Aorta (tissue), 5 donors: ENCODE measurements at regions of chr2 and their contacts with region 1.

Region 1: DNA sequence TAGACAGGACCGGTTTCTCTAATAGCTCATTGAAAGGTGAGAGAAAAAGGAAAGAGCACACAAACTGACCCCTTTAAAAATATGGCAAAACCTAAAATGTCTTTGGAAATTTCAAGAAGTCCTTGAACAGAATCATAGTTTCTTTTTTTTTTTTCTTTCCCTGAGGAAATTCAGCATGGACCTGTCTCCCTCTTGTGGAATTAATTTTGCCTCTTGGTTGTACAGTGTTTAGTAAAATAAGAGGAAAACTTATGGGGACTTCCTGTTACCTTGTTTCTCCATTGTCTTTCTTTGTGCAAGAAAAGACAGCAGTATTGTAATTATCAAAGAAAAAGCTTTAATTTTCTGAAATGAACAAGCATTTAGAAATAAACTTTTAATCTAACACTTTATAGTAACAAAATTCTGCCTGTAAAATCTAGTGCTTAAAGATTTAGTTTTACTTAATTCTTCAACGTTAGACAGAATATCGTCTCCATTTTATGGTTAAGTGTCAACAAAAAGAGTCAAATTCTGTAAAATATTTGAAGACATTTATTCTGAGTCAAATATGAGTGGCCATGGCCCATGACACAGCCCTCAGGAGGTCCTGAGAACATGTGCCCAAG is 176.3 kb upstream of the NABP1 start:
- DNase-seq: no peak
- ATAC-seq: peak; percentile 62
- H3K4me3 ChIP-seq: no peak overlapping the region
- H3K27ac ChIP-seq: no peak overlapping the region
- H3K4me1 ChIP-seq: peaks cover 0 to 2% of the 10 kb centered on the region in 2 donors
- H3K27me3 ChIP-seq: no peaks in the 10 kb centered on the region

Region 2: DNA sequence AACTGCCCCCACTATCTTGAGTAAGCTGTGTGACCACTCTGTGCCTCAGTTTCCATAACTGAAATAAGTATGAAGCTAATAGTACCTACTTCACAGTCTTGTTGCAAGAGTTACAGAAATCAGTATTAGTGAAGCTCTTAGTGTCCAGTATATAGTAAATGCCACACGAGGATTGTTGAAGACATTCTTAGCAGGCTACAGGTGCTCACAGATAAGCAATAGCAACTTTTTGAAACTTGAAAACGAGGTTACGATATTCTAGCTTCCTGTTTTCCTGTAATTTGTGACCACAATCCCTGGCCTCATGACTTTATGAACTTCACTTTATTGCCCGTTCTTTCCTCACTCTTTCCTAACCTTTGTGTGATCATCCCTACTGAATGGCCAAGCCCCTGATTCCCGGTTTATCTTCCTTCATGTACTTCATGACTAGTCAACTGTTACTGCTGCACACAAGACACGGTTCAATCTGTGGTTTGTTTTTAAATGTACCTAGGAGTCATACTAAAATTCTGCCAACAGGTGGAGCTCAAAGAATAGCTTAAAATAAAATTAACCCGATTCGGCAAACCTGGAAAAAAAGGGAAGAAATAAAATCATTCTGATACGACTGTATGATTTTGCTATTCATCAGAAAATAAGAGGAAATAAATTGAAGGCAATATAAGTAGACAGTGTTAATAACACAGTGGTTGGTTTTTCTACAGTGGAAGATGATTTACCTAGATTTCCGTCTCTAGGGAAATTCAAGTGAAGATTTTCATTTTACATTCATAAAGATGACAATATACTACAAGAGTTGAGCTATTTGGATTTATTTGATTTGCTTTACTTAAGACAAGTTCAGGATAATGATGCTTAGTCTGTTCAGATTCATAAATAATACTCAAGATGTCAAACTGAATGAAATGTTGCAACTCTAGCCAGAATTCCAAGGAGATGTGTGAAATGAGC is 449.6 kb before region 1 on chr2:
- intact Hi-C with region 1: loop called in 1 of 2 experiments (anchors 10 kb)
- DNase-seq: no peak
- ATAC-seq: no peak
- H3K4me3 ChIP-seq: no peak overlapping the region
- H3K27ac ChIP-seq: no peak overlapping the region
- H3K4me1 ChIP-seq: no peaks in the 10 kb centered on the region
- H3K27me3 ChIP-seq: no peaks in the 10 kb centered on the region

Region 3: DNA sequence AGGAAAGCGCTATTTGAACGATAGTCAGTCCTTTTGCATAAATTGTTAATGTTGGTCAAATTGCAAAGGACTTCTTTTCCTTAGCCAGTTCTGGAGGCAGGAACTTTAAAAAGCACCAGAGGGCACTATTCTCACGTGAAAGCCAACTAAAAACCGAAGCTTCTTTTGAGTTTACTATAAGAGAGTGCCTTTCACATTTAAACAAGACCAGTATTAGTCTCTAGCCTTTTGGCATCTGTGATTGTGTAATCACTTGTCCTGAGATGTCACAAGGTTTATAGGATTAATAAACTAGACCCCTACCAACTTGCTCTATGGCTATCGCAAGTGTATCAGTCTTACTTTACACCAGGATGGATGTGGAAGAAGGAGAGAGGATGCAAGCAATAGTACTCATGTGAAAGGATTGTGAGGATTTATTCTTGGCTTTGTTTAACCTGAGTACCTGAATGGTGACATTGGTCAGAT is 336.5 kb before region 1 on chr2:
- intact Hi-C with region 1: loop called (anchors 2 to 5 kb)
- DNase-seq: no peak
- ATAC-seq: peak; percentile 91
- H3K4me3 ChIP-seq: no peak overlapping the region
- H3K27ac ChIP-seq: no peak overlapping the region
- H3K4me1 ChIP-seq: peaks cover 4 to 11% of the 10 kb centered on the region in 2 donors
- H3K27me3 ChIP-seq: no peaks in the 10 kb centered on the region

Region 4: GRCh38 chr2:191218292-191218898 is 283.3 kb before region 1 on chr2:
- intact Hi-C with region 1: loop called (anchors 5 kb)
- DNase-seq: no peak
- ATAC-seq: no peak
- H3K4me3 ChIP-seq: no peak overlapping the region
- H3K27ac ChIP-seq: no peak overlapping the region
- H3K4me1 ChIP-seq: peaks cover 0 to 2% of the 10 kb centered on the region in 2 donors
- H3K27me3 ChIP-seq: no peaks in the 10 kb centered on the region

Region 5: GRCh38 chr2:191231995-191232394 is 269.7 kb before region 1 on chr2:
- intact Hi-C with region 1: loop called (anchors 5 kb)
- DNase-seq: no peak
- ATAC-seq: no peak
- H3K4me3 ChIP-seq: no peak overlapping the region
- H3K27ac ChIP-seq: no peak overlapping the region
- H3K4me1 ChIP-seq: peaks cover 0 to 3% of the 10 kb centered on the region in 2 donors
- H3K27me3 ChIP-seq: no peaks in the 10 kb centered on the region

Region 6: GRCh38 chr2:191245046-191245868 is 256.4 kb before region 1 on chr2 and contains the start of gene MYO1B:
- intact Hi-C with region 1: loop called in 1 of 2 experiments (anchors 2 kb)
- DNase-seq: peak; percentile 74 to 92
- ATAC-seq: peak; percentile 83
- H3K4me3 ChIP-seq: peak within 1 kb of the TSS; percentile 72 to 88
- H3K27ac ChIP-seq: peak within 1 kb of the TSS in 1 of 2 donors; percentile 41
- H3K4me1 ChIP-seq: peaks cover 0 to 2% of the 10 kb centered on the region in 2 donors
- H3K27me3 ChIP-seq: no peaks in the 10 kb centered on the region
- total RNA-seq, gene MYO1B: 61.1 to 86.4 TPM

Region 7: GRCh38 chr2:191299010-191299409 is 202.7 kb before region 1 on chr2:
- intact Hi-C with region 1: loop called in 1 of 2 experiments (anchors 5 kb)
- DNase-seq: no peak
- ATAC-seq: peak; percentile 20
- H3K4me3 ChIP-seq: no peak overlapping the region
- H3K27ac ChIP-seq: peak overlapping the region in 1 of 2 donors; percentile 82
- H3K4me1 ChIP-seq: peaks cover 7 to 30% of the 10 kb centered on the region in 2 donors
- H3K27me3 ChIP-seq: no peaks in the 10 kb centered on the region

Region 8: DNA sequence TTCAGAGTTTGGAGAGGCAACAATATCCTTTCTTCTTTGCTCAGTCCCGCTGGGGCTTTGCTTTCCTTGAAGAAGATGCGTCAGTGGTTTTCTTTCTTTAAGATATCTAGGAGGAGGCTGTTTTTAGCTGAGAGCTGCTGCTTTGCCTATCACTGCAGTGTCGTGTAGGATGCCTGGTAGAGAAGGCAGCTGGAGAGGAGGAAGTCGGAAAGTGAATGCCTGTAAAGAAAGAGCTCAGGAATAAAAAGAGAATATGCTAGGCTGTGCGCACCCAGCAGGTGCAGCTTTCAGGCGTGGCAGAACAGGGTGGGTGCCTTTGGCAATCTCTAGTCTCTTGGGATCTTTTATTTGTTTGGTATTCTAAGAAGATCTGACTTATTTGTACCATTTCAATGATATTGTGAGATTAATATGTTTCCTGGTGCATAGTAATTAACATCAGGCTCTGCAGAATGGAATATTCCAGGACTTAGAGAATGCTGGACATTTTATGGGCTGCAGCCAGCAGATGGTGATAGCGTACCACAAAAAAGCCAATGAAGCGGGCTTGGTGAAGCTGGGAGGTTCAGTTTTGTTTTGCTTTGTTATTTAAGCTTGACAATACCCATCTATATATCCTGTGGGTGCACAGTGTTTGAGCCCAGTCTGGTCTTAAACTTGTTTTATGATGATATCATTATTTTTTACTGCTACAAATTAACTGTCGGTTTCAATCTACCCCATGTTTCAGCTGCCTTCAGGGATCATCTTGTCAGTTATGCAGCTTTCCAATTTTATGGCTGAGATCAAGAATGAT is 310.3 kb after region 1 on chr2:
- intact Hi-C with region 1: no loop called
- DNase-seq: peak in 1 of 2 donors; percentile 49
- ATAC-seq: peak; percentile 89
- H3K4me3 ChIP-seq: no peak overlapping the region
- H3K27ac ChIP-seq: no peak overlapping the region
- H3K4me1 ChIP-seq: no peaks in the 10 kb centered on the region
- H3K27me3 ChIP-seq: no peaks in the 10 kb centered on the region